BJ (cell line): ENCODE measurements at regions of chr2 and their contacts with region 1.

Region 1: GRCh38 chr2:6906165-6906741 is 11.0 kb upstream of the RNF144A start:
- DNase-seq: no peak
- H3K4me3 ChIP-seq: no peak overlapping the region
- H3K27me3 ChIP-seq: no peaks in the 10 kb centered on the region
- CTCF ChIP-seq: no peak

Region 2: GRCh38 chr2:6917071-6917760 is 11.0 kb after region 1 on chr2 and contains the start of gene RNF144A:
- CTCF ChIA-PET with region 1: interaction called, 10 read pairs
- POLR2A ChIA-PET with region 1: no interaction called
- DNase-seq: no peak
- H3K4me3 ChIP-seq: peak within 1 kb of the TSS; percentile 40
- H3K27me3 ChIP-seq: peaks cover 7% of the 10 kb centered on the region
- CTCF ChIP-seq: peak; percentile 24
- polyA plus RNA-seq, gene RNF144A: 0.12 and 0.16 TPM in 2 replicates